ENCODE measurements at regions of chr1 and their contacts with region 1.

Region 1: DNA sequence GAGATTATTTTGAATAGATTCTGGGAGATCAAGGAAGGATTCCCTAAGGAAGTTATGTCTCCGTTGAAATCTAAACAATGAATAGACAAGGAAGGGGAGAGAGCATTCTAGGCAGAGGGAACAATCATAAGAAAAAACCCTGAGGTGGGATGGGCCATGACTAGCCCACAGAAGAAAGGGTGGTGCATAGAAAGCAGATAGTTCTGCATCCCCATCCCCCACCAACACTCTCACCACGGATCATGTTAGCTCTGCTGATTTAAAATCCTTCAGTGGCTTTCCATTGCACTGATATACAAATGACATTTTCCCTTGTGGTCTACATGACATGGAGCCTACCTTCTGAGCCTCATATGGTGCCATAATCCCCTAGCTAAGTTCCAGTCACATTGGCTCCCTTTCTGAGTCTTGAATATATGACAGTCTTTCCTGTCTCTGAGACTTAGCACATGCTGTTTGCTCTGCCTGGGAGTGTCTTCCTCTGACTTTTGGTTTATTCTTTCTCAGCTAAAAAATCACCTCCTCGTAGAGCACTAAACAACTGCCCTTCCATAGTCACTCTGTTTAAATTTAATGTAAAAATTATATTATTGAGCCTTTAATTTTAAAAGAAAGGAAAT is 15.2 kb downstream of the SCMH1 start:
- DNase-seq: no peak
- ATAC-seq: no peak
- H3K4me3 ChIP-seq: no peak overlapping the region
- H3K27ac ChIP-seq: no peak overlapping the region
- H3K4me1 ChIP-seq: peaks cover 37% of the 10 kb centered on the region
- H3K27me3 ChIP-seq: no peaks in the 10 kb centered on the region
- CTCF ChIP-seq: no peak
- EP300 ChIP-seq: no peak
- POLR2A ChIP-seq: no peak
- RAD21 ChIP-seq: no peak

Region 2: DNA sequence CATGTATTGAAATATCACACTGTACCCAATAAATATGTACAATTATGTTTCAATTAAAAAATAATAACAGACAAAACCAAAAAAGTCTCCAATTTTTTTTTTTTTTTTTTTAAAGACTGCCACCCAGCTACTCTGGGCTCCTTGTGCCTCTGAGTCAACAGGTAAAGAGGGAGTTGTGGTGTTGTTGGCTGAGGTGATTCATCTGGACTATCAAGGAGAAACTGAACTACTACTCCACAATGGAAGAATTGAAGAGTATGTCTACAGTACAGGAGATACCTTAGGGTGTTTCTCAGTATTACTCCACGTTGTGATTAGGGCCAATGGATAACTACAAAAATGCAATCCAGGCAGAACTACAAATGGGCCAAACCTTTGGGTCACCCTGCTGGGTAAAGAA is 52.8 kb before region 1 on chr1:
- CTCF ChIA-PET with region 1: no interaction called
- POLR2A ChIA-PET with region 1: no interaction called
- in situ Hi-C with region 1: loop called (anchors 5 kb)
- intact Hi-C with region 1: no loop called
- DNase-seq: no peak
- ATAC-seq: no peak
- H3K4me3 ChIP-seq: no peak overlapping the region
- H3K27ac ChIP-seq: no peak overlapping the region
- H3K4me1 ChIP-seq: peaks cover 16% of the 10 kb centered on the region
- H3K27me3 ChIP-seq: no peaks in the 10 kb centered on the region
- CTCF ChIP-seq: no peak
- EP300 ChIP-seq: no peak
- POLR2A ChIP-seq: no peak
- RAD21 ChIP-seq: no peak

Measured in HepG2 (cell line).